Heart left ventricle (tissue), 16 donors: ENCODE measurements at regions of chr14 and their contacts with region 1.

Region 1: GRCh38 chr14:39266871-39267591 is 33.3 kb downstream of the MIA2 start:
- DNase-seq: peak; percentile 86 to 91 (median 89)
- ATAC-seq: peak; percentile 90 to 95 (median 95)
- H3K4me3 ChIP-seq: peak overlapping the region; percentile 57 to 99 (median 82)
- H3K27ac ChIP-seq: peak overlapping the region; percentile 90 to 100 (median 98)
- H3K4me1 ChIP-seq: peaks cover 0 to 52% (median 24%) of the 10 kb centered on the region in 12 donors
- H3K27me3 ChIP-seq: no peaks in the 10 kb centered on the region
- CTCF ChIP-seq: no peak
- POLR2A ChIP-seq: peak in 1 of 2 donors; percentile 51

Region 2: DNA sequence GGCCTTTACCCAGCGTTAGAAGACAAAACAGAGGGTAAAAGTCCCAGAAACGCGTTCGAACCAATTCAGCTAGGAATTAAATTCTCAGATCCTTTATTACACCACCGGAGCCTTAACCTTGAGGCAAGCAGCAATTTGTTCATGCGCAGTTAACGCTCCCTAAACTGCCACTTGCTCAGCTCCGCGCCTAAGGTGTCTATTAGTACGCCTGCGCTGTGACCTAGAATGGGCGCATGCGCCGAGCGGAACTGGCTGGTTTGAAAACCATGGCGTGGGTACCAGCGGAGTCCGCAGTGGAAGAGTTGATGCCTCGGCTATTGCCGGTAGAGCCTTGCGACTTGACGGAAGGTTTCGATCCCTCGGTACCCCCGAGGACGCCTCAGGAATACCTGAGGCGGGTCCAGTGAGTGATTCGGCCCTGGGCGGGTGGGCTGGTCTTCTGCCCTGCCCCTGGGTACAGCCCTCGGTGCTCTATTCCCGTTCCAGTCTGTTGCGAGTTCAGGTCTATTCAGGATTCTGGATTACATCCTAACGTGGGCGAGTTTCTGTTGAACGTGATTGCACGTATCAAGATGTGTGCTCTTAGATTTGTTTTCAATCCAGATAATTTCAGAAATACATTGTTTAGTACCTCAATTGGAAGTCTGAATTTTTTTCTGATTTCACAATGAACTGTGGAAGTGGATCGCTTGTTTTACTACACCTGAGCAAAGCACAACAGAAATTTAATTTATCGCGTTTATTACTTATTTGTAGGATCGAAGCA is 152.8 kb before region 1 on chr14 and contains the start of gene GEMIN2:
- intact Hi-C with region 1: loop called in 3 of 10 experiments (anchors 5 to 10 kb)
- DNase-seq: peak; percentile 90 to 95 (median 93)
- ATAC-seq: peak; percentile 99 to 100 (median 100)
- H3K4me3 ChIP-seq: peak within 1 kb of the TSS; percentile 47 to 92 (median 78)
- H3K27ac ChIP-seq: peak within 1 kb of the TSS; percentile 29 to 84 (median 76)
- H3K4me1 ChIP-seq: peaks cover 0 to 13% (median 10%) of the 10 kb centered on the region in 12 donors
- H3K27me3 ChIP-seq: no peaks in the 10 kb centered on the region
- CTCF ChIP-seq: no peak
- POLR2A ChIP-seq: peak in 1 of 2 donors; percentile 52
- total RNA-seq, gene GEMIN2: 6.3 to 17.8 (median 7.4) TPM

Region 3: GRCh38 chr14:39174560-39175444 is 92.2 kb before region 1 on chr14 and contains the start of gene PNN:
- intact Hi-C with region 1: loop called in 7 of 10 experiments (anchors 1 to 10 kb)
- DNase-seq: peak; percentile 97 to 99 (median 97)
- ATAC-seq: peak; percentile 96 to 98 (median 96)
- H3K4me3 ChIP-seq: peak within 1 kb of the TSS; percentile 39 to 97 (median 80)
- H3K27ac ChIP-seq: peak within 1 kb of the TSS; percentile 77 to 95 (median 93)
- H3K4me1 ChIP-seq: peaks cover 0 to 31% (median 23%) of the 10 kb centered on the region in 12 donors
- H3K27me3 ChIP-seq: no peaks in the 10 kb centered on the region
- CTCF ChIP-seq: no peak
- POLR2A ChIP-seq: peak; percentile 46 to 93
- total RNA-seq, gene PNN: 6.9 to 26.7 (median 21.0) TPM

Region 4: DNA sequence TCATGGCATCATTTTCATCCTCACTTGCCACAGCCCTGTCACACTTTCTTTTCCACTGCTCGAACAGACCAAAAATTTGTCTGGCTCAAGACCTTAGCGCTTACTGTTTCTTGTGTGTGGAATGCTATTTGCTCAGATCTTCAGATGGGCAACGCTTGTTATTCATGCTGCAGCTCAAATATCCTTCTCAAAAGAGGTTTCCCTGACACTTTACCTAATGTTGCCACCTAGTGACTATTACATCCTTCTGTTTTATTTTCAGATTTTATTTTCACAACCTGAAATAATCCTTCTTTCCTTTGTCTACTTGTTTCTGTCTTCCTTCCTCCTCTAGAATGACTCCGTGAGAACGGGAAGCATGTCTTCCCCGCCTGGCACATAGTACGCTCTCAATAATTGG is 159.6 kb after region 1 on chr14:
- intact Hi-C with region 1: loop called in 3 of 10 experiments (anchors 5 to 10 kb)
- DNase-seq: no peak
- ATAC-seq: no peak
- H3K4me3 ChIP-seq: no peak overlapping the region
- H3K27ac ChIP-seq: no peak overlapping the region
- H3K4me1 ChIP-seq: peaks cover 3 to 78% (median 56%) of the 10 kb centered on the region in 12 donors
- H3K27me3 ChIP-seq: no peaks in the 10 kb centered on the region
- CTCF ChIP-seq: peak in 7 of 12 donors; percentile 4 to 37 (median 23)
- POLR2A ChIP-seq: no peak